ENCODE measurements at regions of chr17 and their contacts with region 1.

Region 1: GRCh38 chr17:48636177-48637018 is 10.2 kb upstream of the HOXB9 start:
- DNase-seq: peak; percentile 89
- ATAC-seq: peak; percentile 95
- H3K4me3 Mint-ChIP-seq: no peak overlapping the region
- H3K27ac Mint-ChIP-seq: no peak overlapping the region
- H3K4me1 Mint-ChIP-seq: peaks cover 6% of the 10 kb centered on the region
- H3K27me3 Mint-ChIP-seq: peaks cover 74% of the 10 kb centered on the region
- CTCF ChIP-seq: peak; percentile 77

Region 2: GRCh38 chr17:48604770-48605329 is 31.5 kb before region 1 on chr17 and contains the start of gene HOXB6:
- CTCF ChIA-PET with region 1: interaction called, 11 read pairs
- POLR2A ChIA-PET with region 1: no interaction called
- intact Hi-C with region 1: no loop called
- DNase-seq: no peak
- ATAC-seq: no peak
- H3K4me3 Mint-ChIP-seq: no peak within 1 kb of the TSS
- H3K27ac Mint-ChIP-seq: no peak within 1 kb of the TSS
- H3K4me1 Mint-ChIP-seq: peaks cover 16% of the 10 kb centered on the region
- H3K27me3 Mint-ChIP-seq: peaks cover 83% of the 10 kb centered on the region
- CTCF ChIP-seq: no peak
- total RNA-seq, gene HOXB6: not detected

Region 3: GRCh38 chr17:48625495-48626244 is 10.7 kb before region 1 on chr17:
- CTCF ChIA-PET with region 1: interaction called, 33 read pairs
- POLR2A ChIA-PET with region 1: no interaction called
- intact Hi-C with region 1: no loop called
- DNase-seq: peak; percentile 55
- ATAC-seq: peak; percentile 58
- H3K4me3 Mint-ChIP-seq: peak overlapping the region; percentile 77
- H3K27ac Mint-ChIP-seq: peak overlapping the region; percentile 52
- H3K4me1 Mint-ChIP-seq: peaks cover 8% of the 10 kb centered on the region
- H3K27me3 Mint-ChIP-seq: peaks cover 77% of the 10 kb centered on the region
- CTCF ChIP-seq: no peak

Region 4: GRCh38 chr17:48655913-48656312 is 19.5 kb after region 1 on chr17:
- CTCF ChIA-PET with region 1: interaction called, 30 read pairs
- POLR2A ChIA-PET with region 1: no interaction called
- intact Hi-C with region 1: no loop called
- DNase-seq: no peak
- ATAC-seq: no peak
- H3K4me3 Mint-ChIP-seq: no peak overlapping the region
- H3K27ac Mint-ChIP-seq: no peak overlapping the region
- H3K4me1 Mint-ChIP-seq: peaks cover 4% of the 10 kb centered on the region
- H3K27me3 Mint-ChIP-seq: peaks cover 2% of the 10 kb centered on the region
- CTCF ChIP-seq: no peak

Region 5: DNA sequence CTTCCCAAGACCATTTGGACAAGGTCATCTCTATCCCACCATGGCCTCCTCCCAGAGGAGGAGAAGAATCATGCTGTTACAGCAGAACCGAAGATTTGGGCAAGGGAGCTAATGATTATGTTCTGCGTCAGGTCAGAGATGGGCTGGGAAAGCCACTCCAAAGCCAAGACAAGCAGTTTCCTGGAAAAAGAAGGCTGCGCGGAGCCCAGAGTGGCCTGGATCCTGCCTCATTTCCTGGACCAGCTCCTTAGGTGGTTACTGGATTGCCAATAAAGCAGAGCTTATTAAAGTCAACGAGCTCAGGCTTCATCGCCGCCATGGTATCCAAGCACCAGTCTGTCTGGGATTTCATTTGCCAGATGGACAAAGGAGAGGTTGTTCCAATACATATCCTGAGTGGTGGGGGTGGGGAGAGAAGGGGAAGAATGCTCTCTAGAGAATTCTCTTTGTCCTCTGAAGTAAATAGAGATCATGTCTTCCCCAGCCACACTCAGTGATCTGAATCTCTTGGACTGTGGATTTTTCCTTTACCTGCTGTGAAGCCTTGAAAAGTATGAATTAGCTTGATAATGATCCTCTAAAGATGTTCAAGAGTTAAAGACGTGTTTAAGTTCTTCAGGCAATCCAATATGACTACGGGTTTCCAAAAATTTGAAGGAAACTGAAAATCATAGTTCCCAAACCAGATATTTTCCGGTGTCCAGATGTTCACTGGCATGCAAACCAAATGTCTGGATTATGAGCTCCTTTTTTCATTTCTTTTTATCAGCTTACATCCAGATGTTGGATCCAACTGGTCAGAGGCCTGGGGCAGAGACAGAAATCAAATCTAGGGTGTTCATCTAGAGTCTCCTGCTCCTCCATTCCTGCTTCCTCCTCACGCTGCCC is 68.2 kb after region 1 on chr17:
- CTCF ChIA-PET with region 1: interaction called, 10 read pairs
- POLR2A ChIA-PET with region 1: no interaction called
- intact Hi-C with region 1: no loop called
- DNase-seq: no peak
- ATAC-seq: no peak
- H3K4me3 Mint-ChIP-seq: no peak overlapping the region
- H3K27ac Mint-ChIP-seq: no peak overlapping the region
- H3K4me1 Mint-ChIP-seq: no peaks in the 10 kb centered on the region
- H3K27me3 Mint-ChIP-seq: peaks cover 58% of the 10 kb centered on the region
- CTCF ChIP-seq: no peak